PC-3 (cell line): ENCODE measurements at regions of chr13 and their contacts with region 1.

Region 1: DNA sequence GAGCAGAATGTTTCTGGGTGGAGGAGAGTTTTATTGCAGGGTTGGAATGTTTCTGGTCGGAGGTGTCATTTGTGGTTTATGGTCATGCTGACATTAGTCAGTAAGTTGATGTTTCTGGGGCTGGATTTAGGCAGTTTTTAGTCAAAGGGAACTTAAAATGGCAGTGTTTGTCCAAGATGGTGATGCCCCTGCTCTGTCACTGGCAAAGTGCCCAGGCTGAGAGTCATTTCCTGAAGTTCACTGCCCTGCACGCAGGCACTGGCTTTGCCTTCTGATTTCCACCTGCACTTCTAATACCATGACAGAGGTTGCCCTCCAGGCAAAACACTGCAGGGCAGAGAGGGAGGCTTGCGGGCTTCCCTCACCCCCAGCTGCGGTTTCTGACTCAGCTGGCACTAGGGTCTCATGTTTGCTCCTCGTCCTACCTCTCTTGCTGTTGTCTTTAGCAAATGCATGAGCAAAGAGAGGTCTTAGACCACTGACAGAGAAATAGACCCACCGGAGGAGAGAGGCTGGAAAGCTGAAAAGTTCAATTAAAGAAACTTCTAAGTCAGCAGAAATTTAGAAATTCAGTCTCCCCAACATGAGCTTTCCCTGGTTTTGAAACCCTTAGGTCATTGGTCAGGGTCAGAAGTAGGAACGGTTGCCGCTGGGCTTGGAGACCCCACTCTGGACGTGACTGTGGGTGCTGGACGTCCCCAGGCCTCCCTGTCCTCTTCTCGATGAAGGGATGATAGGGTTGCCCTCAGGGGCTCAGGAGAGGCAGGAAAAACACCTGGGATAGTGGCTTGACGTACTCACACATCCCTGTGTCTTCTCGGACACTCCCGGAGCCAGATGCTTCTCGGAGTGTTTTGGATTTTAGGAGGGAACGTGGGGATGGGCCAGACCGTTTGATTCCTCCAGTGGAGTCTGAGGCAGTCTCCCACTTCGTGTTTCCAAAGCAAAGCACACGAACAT is 26.3 kb downstream of the TMEM255B start:
- DNase-seq: peak; percentile 97
- ATAC-seq: peak; percentile 92
- H3K4me3 ChIP-seq: peak overlapping the region; percentile 31; the same call in 1 of the 2 replicates
- H3K27ac ChIP-seq: peak overlapping the region; percentile 99
- H3K4me1 ChIP-seq: peaks cover 35% of the 10 kb centered on the region
- H3K27me3 ChIP-seq: no peaks in the 10 kb centered on the region
- CTCF ChIP-seq: no peak

Region 2: GRCh38 chr13:113758651-113759524 is 26.4 kb before region 1 on chr13 and contains the start of gene TMEM255B:
- CTCF ChIA-PET with region 1: no interaction called
- POLR2A ChIA-PET with region 1: no interaction called
- intact Hi-C with region 1: loop called (anchors 2 kb)
- DNase-seq: peak; percentile 71
- ATAC-seq: peak; percentile 91
- H3K4me3 ChIP-seq: peak within 1 kb of the TSS; percentile 97
- H3K27ac ChIP-seq: peak within 1 kb of the TSS; percentile 17; the same call in 1 of the 2 replicates
- H3K4me1 ChIP-seq: peaks cover 22% of the 10 kb centered on the region
- H3K27me3 ChIP-seq: no peaks in the 10 kb centered on the region
- CTCF ChIP-seq: no peak
- total RNA-seq, gene TMEM255B: 26.9 and 35.5 TPM in 2 replicates

Region 3: GRCh38 chr13:113774177-113775107 is 10.9 kb before region 1 on chr13:
- CTCF ChIA-PET with region 1: no interaction called
- POLR2A ChIA-PET with region 1: interaction called, 6 read pairs
- intact Hi-C with region 1: loop called (anchors 1 kb)
- DNase-seq: peak; percentile 81
- ATAC-seq: peak; percentile 66
- H3K4me3 ChIP-seq: no peak overlapping the region
- H3K27ac ChIP-seq: peak overlapping the region; percentile 60
- H3K4me1 ChIP-seq: peaks cover 35% of the 10 kb centered on the region
- H3K27me3 ChIP-seq: no peaks in the 10 kb centered on the region
- CTCF ChIP-seq: no peak

Region 4: GRCh38 chr13:113976711-113977684 is 191.7 kb after region 1 on chr13:
- CTCF ChIA-PET with region 1: no interaction called
- POLR2A ChIA-PET with region 1: no interaction called
- intact Hi-C with region 1: no loop called
- DNase-seq: peak; percentile 68
- ATAC-seq: peak; percentile 78
- H3K4me3 ChIP-seq: no peak overlapping the region
- H3K27ac ChIP-seq: no peak overlapping the region
- H3K4me1 ChIP-seq: peaks cover 21% of the 10 kb centered on the region
- H3K27me3 ChIP-seq: no peaks in the 10 kb centered on the region
- CTCF ChIP-seq: no peak